A673 (cell line): ENCODE measurements at regions of chr10 and their contacts with region 1.

Region 1: DNA sequence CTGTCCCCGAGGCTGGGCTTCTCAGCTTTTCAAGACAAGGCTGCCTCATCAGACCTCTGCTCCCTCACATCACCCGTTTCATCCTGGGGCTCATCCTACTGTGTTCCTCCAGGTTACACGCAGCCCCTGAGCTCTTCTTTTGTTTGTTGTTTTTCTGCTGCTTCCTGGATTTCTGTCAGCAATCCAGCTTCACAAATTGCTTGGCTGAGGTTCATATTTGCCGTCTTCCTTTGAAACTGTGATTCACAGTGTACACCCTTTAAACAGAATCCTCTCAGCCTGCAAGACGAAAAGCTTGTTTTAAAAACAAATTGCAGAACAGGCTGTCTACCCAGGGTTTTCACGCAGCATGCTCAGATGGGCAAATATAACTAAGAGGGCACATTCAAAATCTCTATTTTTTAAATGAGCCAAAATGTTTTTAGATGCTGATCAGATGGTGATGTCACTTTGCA is 39.1 kb upstream of the PARD3 start:
- DNase-seq: no peak
- H3K4me3 ChIP-seq: no peak overlapping the region
- H3K27ac ChIP-seq: no peak overlapping the region
- H3K4me1 ChIP-seq: no peaks in the 10 kb centered on the region
- H3K27me3 ChIP-seq: no peaks in the 10 kb centered on the region
- CTCF ChIP-seq: no peak

Region 2: DNA sequence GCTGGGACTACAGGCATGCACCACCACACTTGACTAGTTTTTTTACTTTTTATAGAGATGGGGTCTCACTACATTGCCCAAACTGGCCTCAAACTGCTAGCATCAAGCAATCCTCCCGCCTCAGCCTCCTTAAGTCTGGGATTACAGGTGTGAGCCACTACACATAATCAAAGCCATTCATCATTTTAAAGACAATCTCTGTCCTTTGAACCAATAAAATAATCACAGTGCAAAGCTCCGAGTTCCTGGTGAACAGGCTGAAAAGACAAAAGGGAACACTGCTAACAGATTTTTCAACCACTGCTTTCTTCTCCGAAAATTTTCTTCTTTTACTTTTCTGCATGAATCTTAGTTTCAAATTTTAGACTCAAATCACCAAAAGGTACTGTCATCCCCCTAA is 97.6 kb before region 1 on chr10:
- CTCF ChIA-PET with region 1: no interaction called
- POLR2A ChIA-PET with region 1: interaction called, 18 read pairs
- intact Hi-C with region 1: no loop called
- DNase-seq: no peak
- H3K4me3 ChIP-seq: no peak overlapping the region
- H3K27ac ChIP-seq: no peak overlapping the region
- H3K4me1 ChIP-seq: peaks cover 22% of the 10 kb centered on the region
- H3K27me3 ChIP-seq: no peaks in the 10 kb centered on the region
- CTCF ChIP-seq: no peak

Region 3: GRCh38 chr10:34933676-34934075 is 79.5 kb after region 1 on chr10:
- CTCF ChIA-PET with region 1: no interaction called
- POLR2A ChIA-PET with region 1: no interaction called
- intact Hi-C with region 1: no loop called
- DNase-seq: no peak
- H3K4me3 ChIP-seq: no peak overlapping the region
- H3K27ac ChIP-seq: no peak overlapping the region
- H3K4me1 ChIP-seq: no peaks in the 10 kb centered on the region
- H3K27me3 ChIP-seq: no peaks in the 10 kb centered on the region
- CTCF ChIP-seq: no peak